ENCODE measurements at regions of chr11 and their contacts with region 1.

Region 1: DNA sequence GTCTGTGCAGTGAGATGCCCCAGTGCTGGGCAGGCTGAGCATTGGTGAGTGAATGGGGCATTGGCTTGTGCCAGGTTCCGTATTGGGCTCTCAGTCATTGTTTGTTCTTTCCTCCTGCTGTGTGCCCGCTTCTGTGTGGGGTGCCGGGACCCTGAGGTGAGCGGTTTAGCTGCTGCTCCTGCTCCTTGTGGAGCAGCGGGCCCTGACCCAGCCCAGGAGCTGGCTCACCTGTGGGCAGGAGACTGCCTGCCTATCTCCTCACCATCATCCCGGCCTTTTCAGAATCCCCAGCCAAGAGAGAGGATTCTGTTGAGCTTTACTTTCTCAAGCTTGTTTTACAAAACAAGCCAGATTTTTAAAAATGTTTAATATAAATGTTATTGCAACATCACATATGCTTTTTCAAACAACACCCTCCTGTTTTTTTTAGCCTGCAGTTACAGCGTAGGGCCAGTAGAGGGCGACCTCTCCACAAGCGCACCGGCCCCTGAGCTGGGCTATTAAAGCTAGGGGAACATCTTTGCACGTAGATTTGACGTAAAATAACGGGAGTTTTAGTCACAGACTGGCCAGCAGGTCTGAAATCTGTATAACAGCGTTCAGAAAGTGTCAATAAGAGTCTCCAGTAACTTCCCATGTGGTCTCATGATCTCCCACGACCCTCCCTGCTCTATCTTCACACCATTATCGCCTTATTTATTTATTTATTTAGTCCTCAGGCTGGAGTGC is 25.1 kb upstream of the RELT start:
- DNase-seq: peak; percentile 85
- CTCF ChIP-seq: peak; percentile 94

Region 2: DNA sequence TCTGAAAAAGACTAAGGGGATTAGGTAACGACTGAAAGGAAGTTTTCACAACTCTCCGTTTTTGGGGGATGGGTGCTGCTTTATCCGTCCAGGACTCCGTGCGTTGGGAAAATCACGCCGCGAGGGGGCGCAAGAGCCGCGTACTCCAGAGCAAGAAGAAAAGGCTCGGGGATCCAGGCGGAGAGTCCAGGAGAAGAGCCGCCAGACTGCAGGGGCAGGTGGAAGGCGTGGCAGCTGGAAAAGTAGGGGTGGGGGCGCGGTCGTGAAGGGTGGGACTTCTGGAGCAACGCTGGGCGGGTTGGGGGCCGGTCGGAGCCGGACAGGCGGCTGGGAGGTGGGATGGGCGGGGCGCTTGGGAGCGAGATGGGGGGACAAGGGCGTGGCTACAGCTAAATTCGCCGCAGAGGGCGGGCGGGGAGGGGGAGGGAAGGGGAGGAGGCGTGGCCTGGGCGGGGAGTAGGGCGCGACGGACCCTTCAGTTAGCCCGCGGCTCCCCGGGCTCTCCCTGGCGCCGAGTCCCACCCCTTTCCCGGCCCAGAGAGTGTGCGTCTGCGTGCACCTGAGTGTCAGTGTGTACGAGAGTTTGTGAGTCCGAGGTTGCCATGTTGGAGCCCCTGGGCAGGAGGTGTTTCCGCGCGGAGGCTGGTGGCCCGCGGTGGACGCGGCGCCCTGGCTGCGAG is 43.6 kb before region 1 on chr11:
- CTCF ChIA-PET with region 1: interaction called, 44 read pairs
- POLR2A ChIA-PET with region 1: no interaction called
- DNase-seq: peak; percentile 95
- CTCF ChIP-seq: peak; percentile 89

Region 3: GRCh38 chr11:73335204-73335923 is 15.7 kb before region 1 on chr11:
- CTCF ChIA-PET with region 1: interaction called, 112 read pairs
- POLR2A ChIA-PET with region 1: no interaction called
- DNase-seq: peak; percentile 84
- CTCF ChIP-seq: peak; percentile 99

Region 4: DNA sequence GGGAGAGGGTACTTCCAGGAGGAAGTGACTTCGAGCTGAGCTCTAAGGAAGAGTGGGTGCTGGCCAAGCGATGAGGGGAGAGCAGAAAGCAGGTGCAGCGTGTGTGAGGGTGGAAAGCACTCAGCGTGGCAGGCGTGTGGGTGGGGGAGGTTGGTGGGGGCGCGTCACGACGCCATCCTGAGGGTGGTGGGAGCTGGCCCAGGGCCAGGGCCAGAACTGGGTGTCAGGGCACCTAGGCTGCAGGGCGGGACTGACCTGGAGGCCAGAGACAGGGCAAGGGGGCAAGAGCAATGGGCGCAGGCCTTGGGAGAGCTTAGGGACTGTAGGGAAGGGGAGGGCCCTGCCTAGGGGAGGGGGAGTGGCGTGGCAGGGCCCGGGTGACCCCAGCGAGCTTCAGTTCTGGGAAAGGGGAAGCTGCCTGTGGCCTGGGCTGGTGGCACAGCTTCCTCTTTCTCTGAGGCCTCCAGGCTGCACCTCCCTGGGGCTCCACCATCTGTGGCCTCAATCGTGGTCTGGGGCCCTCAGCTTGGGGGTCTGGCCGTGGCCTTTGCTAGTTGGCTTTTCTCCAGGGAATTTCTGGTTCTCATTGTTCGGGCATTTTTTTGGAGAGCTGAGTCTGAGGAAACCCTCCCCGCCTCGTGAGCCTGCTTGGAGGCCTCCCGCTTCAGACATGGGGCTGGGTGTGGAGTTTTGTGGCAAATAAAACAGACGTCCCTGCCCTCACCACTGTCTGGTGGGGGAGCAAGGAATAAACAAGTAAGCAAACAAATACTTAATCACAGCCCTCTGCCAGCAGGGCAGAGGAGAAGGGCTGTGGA is 34.0 kb after region 1 on chr11:
- CTCF ChIA-PET with region 1: interaction called, 50 read pairs
- POLR2A ChIA-PET with region 1: no interaction called
- DNase-seq: peak; percentile 83
- CTCF ChIP-seq: no peak

Region 5: DNA sequence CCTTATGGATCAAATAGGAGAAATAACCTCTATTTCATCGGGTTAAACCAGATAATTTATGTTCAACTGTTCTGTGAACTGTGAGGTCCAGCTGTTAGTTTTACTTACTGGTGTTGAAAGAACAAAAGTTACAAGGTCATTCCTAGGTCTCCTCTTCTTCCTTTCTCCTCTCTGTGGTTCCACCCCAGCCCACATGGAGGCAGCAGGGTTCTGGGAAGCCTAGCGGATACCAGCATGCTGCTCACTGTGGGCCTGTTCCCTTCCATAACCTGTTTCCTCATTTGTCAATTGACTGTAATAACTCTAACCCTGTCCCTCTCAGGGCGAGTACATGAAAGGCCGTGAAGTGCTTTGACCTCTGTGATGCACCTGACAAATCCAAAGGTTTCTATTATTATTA is 53.0 kb after region 1 on chr11:
- CTCF ChIA-PET with region 1: interaction called, 87 read pairs
- POLR2A ChIA-PET with region 1: no interaction called
- DNase-seq: peak; percentile 18
- CTCF ChIP-seq: peak; percentile 21

Region 6: DNA sequence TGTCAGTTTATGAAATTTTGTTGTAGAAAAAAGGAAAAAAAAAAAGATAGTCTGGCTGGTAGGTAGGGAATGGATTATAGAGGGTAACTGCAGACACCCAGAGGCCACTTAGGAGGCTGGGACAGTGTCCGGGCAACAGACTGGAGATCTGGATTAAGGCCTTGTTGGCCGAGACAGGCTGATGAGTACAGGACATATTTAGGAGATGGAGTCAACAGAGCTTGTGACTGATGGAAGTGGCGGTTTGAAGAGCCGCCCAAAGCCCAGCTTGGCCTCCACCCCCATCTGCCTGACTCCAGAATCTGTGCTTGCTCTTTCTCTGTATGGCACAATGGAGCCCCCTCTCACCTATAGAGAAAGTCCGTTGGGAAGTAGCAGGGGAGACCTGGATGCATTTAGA is 302.9 kb after region 1 on chr11:
- CTCF ChIA-PET with region 1: interaction called, 160 read pairs
- POLR2A ChIA-PET with region 1: no interaction called
- DNase-seq: no peak
- CTCF ChIP-seq: no peak

Measured in GM10248 (cell line).